Right lobe of liver (tissue), 6 donors: ENCODE measurements at regions of chr1 and their contacts with region 1.

Region 1: DNA sequence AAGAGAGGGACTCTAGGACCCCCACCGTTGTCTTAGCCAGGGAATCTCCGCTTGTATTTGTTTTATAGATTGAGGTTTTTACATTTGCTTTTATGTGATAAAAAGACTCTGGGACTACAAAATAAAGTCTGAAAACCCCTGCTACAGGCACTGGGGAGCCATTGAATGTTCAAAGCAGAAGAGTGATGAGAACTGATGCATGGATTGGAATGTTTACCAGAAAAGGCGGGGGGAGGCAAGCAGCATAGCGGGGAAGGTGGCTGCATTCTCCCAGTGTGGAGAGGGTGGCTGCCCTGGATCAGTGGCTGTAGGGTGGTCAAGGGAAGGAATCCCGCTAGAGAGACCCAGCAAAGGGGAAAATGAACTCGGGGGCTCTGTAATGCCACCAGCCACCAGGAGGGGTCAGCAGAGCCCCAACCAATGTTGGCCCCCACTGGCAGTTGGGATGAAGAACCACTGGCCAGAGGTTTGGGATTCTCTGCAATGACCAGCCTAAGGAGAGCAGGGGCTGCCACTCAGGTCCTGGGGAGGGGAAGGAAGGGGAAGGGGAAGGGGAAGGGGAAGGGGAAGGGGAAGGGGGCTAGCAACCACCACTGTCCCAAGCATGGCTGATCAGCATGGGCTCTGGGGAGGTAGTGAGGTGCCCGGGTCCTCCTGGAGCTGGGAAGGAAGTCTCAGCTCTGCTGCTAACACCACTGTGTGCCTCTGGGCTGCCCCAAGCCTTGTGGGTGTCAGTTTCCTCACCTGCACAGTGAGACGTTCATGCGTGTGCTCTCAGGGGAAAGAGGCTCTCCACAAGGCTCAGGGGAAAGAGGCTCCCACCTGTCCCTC is 19.2 kb upstream of the PEF1 start:
- DNase-seq: peak in 2 of 3 donors; percentile 51 to 60
- ATAC-seq: peak; percentile 68 to 87 (median 84)
- H3K4me3 ChIP-seq: no peak overlapping the region
- H3K27ac ChIP-seq: no peak overlapping the region
- H3K4me1 ChIP-seq: no peaks in the 10 kb centered on the region
- H3K27me3 ChIP-seq: no peaks in the 10 kb centered on the region
- CTCF ChIP-seq: peak; percentile 80 to 97 (median 83)
- POLR2A ChIP-seq: no peak

Region 2: GRCh38 chr1:31715087-31715872 is 51.4 kb after region 1 on chr1:
- intact Hi-C with region 1: loop called in 1 of 2 experiments (anchors 10 kb)
- DNase-seq: peak; percentile 87 to 94 (median 90)
- ATAC-seq: peak; percentile 94 to 98 (median 96)
- H3K4me3 ChIP-seq: peak overlapping the region; percentile 31 to 68 (median 53)
- H3K27ac ChIP-seq: peak overlapping the region; percentile 52 to 74 (median 72)
- H3K4me1 ChIP-seq: peaks cover 0 to 8% (median 2%) of the 10 kb centered on the region in 4 donors
- H3K27me3 ChIP-seq: no peaks in the 10 kb centered on the region
- CTCF ChIP-seq: peak; percentile 70 to 89 (median 88)
- POLR2A ChIP-seq: peak; percentile 67

Region 3: GRCh38 chr1:31789259-31790065 is 125.6 kb after region 1 on chr1:
- intact Hi-C with region 1: loop called (anchors 2 to 5 kb)
- DNase-seq: peak; percentile 93 to 94 (median 94)
- ATAC-seq: peak; percentile 89 to 96 (median 94)
- H3K4me3 ChIP-seq: peak overlapping the region; percentile 46 to 56 (median 51)
- H3K27ac ChIP-seq: peak overlapping the region in 1 of 3 donors; percentile 6
- H3K4me1 ChIP-seq: no peaks in the 10 kb centered on the region
- H3K27me3 ChIP-seq: no peaks in the 10 kb centered on the region
- CTCF ChIP-seq: peak; percentile 71 to 92 (median 74)
- POLR2A ChIP-seq: no peak